ENCODE measurements at regions of chr7 and their contacts with region 1.

Region 1: DNA sequence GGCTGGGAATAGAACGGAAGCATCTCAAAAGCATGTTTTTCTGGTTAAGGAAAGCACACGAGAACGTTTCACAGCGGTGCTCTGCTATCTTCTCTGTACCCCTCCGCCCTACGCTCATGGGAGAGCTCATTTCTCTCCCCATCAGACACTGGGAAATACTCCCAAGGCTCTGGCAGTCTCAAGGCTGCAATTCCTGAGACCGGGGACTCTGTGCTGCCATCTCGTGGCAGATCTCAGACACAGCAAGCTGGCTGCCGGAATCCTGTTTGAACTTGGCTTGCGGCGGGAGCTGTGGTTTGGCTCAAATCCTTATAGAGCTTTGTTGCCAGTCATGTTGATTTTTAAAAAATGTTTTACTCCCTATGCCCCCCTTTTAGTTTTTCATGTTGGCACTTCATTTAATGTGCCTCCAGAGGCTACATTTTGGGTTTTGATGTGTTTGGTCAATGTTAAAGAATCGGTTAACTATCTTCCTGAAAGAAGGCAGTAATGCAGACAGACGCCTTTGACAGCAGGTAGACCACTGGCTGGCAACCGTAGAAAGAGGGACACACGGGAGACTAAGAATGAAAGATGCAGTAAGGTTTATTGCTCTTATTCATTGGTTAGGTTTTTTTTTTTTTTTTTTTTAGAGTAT is 27.6 kb downstream of the BMPER start:
- DNase-seq: peak; percentile 70
- H3K4me3 Mint-ChIP-seq: no peak overlapping the region
- H3K27ac Mint-ChIP-seq: no peak overlapping the region
- H3K4me1 Mint-ChIP-seq: peaks cover 2% of the 10 kb centered on the region
- H3K27me3 Mint-ChIP-seq: peaks cover 18% of the 10 kb centered on the region

Region 2: GRCh38 chr7:33185786-33186185 is 747.2 kb before region 1 on chr7:
- CTCF ChIA-PET with region 1: interaction called, 26 read pairs
- POLR2A ChIA-PET with region 1: no interaction called
- intact Hi-C with region 1: loop called (anchors 2 kb)
- DNase-seq: no peak
- H3K4me3 Mint-ChIP-seq: no peak overlapping the region
- H3K27ac Mint-ChIP-seq: no peak overlapping the region
- H3K4me1 Mint-ChIP-seq: peaks cover 5% of the 10 kb centered on the region
- H3K27me3 Mint-ChIP-seq: no peaks in the 10 kb centered on the region

Region 3: GRCh38 chr7:33243319-33243881 is 689.5 kb before region 1 on chr7:
- CTCF ChIA-PET with region 1: interaction called, 7 read pairs
- POLR2A ChIA-PET with region 1: no interaction called
- intact Hi-C with region 1: loop called (anchors 10 kb)
- DNase-seq: no peak
- H3K4me3 Mint-ChIP-seq: no peak overlapping the region
- H3K27ac Mint-ChIP-seq: no peak overlapping the region
- H3K4me1 Mint-ChIP-seq: no peaks in the 10 kb centered on the region
- H3K27me3 Mint-ChIP-seq: no peaks in the 10 kb centered on the region

Region 4: GRCh38 chr7:33423646-33424020 is 509.3 kb before region 1 on chr7:
- CTCF ChIA-PET with region 1: no interaction called
- POLR2A ChIA-PET with region 1: no interaction called
- intact Hi-C with region 1: loop called (anchors 2 kb)
- DNase-seq: peak; percentile 13
- H3K4me3 Mint-ChIP-seq: no peak overlapping the region
- H3K27ac Mint-ChIP-seq: no peak overlapping the region
- H3K4me1 Mint-ChIP-seq: no peaks in the 10 kb centered on the region
- H3K27me3 Mint-ChIP-seq: no peaks in the 10 kb centered on the region

Region 5: DNA sequence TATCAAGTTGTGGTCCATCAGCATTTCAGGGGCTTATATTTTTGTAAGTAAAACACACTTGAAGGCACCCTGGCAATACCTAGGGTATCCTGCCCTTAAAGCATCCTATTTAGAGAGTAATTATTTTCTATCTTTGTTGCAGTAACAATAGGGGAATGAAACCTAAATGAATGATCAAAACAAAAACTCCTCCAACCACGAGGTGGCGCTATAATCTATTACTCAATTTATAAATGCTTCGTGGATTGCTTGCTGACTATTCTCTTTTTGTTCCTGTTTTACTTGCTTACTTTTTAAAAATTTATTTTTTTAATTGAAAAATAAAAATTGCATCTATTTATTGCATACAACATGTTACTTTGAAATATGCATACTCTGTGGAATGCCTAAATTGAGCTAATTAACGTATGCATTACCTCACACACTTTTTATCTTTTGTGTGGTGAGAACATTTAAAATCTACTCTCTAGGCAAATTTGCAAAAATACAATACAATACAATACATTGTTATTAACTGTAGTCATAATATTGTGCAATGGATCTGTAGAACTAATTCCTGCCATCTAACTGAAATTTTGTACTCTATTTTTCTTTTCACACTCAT is 175.3 kb before region 1 on chr7:
- CTCF ChIA-PET with region 1: interaction called, 7 read pairs
- POLR2A ChIA-PET with region 1: no interaction called
- intact Hi-C with region 1: loop called (anchors 2 kb)
- DNase-seq: no peak
- H3K4me3 Mint-ChIP-seq: no peak overlapping the region
- H3K27ac Mint-ChIP-seq: no peak overlapping the region
- H3K4me1 Mint-ChIP-seq: no peaks in the 10 kb centered on the region
- H3K27me3 Mint-ChIP-seq: peaks cover 1% of the 10 kb centered on the region

Region 6: DNA sequence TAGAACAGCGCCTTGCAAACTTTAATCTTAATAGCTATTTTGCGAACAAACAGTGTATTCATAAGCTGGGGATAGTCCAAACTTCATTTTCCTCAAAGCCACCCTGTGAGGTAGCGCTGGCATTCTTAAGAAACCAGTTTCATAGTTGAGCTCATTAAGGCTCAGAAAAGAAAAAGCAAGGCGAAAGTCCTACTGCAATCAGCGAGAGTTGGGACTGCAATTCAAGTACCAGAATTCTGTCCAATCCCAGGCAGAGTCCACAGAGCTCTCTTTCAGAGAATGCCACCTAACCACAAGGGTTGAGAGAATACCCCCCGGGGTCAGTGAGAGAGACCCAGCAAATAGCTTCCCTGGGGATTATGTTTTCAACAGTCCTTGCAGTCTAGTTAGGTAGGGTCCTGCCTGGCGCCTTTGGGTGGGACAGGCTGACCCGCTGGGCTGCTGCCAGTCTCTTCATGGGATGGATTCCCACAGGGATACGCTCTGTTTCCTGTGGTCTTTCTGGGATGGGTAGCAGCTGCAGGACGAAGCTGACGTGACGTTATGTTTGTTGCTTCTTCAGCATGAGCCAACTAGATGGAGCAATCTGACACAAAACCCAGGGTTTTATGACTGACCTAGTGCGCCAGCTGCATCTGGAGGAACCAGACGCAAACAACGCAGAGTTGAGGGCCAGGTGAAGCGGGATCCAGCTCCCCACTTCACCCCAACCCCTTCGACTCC is 11.6 kb before region 1 on chr7:
- CTCF ChIA-PET with region 1: interaction called, 20 read pairs
- POLR2A ChIA-PET with region 1: no interaction called
- intact Hi-C with region 1: no loop called
- DNase-seq: no peak
- H3K4me3 Mint-ChIP-seq: no peak overlapping the region
- H3K27ac Mint-ChIP-seq: no peak overlapping the region
- H3K4me1 Mint-ChIP-seq: no peaks in the 10 kb centered on the region
- H3K27me3 Mint-ChIP-seq: peaks cover 8% of the 10 kb centered on the region